AG04449 (cell line): ENCODE measurements at regions of chr3 and their contacts with region 1.

Region 1: DNA sequence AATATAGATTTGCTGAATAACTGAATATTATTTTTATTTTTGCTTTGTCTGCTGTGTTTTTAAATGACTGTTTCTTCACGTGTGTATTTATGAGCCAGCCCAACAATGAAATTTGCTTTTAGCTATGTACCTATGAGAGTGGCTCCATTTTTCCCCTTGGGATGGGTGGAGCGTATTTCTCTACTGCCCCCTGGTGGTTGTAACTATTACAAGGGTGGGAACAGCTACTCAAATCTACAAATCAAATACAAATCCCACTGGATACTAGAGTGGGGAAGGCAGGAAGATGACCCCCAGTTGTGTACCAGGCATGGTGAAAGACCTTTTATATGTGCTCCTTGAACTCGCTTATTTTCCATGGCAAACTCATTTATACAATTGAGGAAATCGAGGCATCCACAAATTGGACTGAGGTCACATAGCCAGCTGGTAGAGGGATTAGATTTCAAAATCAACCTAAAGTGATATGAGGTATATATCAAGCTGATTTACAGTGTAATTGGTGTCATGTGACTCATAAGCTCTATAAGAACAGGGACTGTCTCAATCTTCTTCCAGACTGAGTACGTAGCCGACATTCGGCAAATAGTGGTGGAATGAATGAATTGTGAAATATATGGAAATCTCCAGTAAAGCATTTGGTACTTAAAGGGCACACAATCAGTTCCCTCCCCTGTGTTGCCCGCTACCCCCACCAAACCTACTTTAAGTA is 69.5 kb upstream of the VEPH1 start:
- DNase-seq: no peak
- H3K4me3 ChIP-seq: no peak overlapping the region
- CTCF ChIP-seq: peak; percentile 44

Region 2: GRCh38 chr3:157527131-157527881 is 45.4 kb before region 1 on chr3:
- CTCF ChIA-PET with region 1: interaction called, 150 read pairs
- POLR2A ChIA-PET with region 1: interaction called, 6 read pairs
- DNase-seq: no peak
- H3K4me3 ChIP-seq: no peak overlapping the region
- CTCF ChIP-seq: no peak

Region 3: DNA sequence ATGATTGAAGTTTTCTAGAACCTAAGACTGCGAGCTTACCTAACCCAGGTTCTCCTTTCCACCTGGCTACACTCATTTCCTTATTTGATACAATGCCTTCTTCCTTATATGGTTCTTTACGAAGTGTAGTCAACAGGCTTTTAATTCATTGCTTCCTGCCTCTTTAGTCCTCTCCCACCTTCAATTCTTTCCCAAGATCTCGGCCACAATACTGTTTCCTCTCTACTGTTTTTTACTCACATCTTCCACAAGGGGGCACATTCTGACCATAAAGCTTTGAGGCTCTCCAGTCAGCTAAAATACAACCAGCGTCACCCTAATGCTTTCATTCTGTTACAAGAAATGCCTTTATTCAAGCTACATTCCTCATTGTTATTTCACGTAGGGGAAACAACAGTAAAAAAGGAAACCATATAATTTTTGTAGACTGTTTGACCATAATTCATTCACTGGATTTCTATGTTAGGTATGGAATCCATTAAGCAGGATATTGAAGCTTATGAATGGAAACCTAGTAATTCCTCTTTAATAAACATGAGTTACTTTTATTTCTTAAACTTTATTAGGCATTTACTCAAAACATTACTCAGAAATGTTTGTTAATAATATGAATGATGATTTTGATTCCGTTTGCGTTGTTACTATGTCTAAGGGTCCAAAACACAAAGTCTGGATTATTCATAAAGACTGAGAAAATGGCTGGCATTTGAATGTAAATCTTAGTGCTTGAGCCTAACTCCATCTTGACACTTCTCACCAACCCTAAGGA is 40.0 kb before region 1 on chr3:
- CTCF ChIA-PET with region 1: interaction called, 150 read pairs
- POLR2A ChIA-PET with region 1: interaction called, 6 read pairs
- DNase-seq: peak; percentile 71
- H3K4me3 ChIP-seq: peak overlapping the region; percentile 44
- CTCF ChIP-seq: peak; percentile 59

Region 4: GRCh38 chr3:157542711-157543500 is 29.8 kb before region 1 on chr3:
- CTCF ChIA-PET with region 1: interaction called, 33 read pairs
- POLR2A ChIA-PET with region 1: no interaction called
- DNase-seq: no peak
- H3K4me3 ChIP-seq: peak overlapping the region; percentile 58
- CTCF ChIP-seq: peak; percentile 55

Region 5: GRCh38 chr3:157551961-157552360 is 20.8 kb before region 1 on chr3:
- CTCF ChIA-PET with region 1: interaction called, 15 read pairs
- POLR2A ChIA-PET with region 1: no interaction called
- DNase-seq: no peak
- H3K4me3 ChIP-seq: no peak overlapping the region
- CTCF ChIP-seq: no peak

Region 6: DNA sequence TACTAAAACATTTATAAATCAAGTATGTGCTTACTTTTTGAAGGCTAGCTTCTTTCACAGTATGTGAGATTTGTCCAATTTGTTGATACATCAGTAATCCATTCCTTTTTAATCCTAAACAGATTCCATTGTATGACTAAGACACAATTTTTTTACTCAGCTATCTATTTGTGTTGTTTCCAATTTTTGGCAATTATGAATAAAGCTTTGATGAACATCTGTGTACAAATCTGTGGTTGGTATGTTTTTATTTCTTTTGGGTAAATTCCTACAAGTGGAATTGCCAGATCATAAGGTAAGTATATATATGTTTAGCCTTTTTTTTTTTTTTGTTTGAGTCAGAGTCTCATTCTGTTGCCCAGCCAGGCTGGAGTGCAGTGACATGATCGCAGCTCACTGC is 13.3 kb before region 1 on chr3:
- CTCF ChIA-PET with region 1: interaction called, 25 read pairs
- POLR2A ChIA-PET with region 1: no interaction called
- DNase-seq: no peak
- H3K4me3 ChIP-seq: no peak overlapping the region
- CTCF ChIP-seq: no peak

Region 7: GRCh38 chr3:157589211-157589610 is 16.5 kb after region 1 on chr3:
- CTCF ChIA-PET with region 1: interaction called, 14 read pairs
- POLR2A ChIA-PET with region 1: no interaction called
- DNase-seq: no peak
- H3K4me3 ChIP-seq: no peak overlapping the region
- CTCF ChIP-seq: no peak

Region 8: GRCh38 chr3:157856078-157856939 is 283.6 kb after region 1 on chr3:
- CTCF ChIA-PET with region 1: no interaction called
- POLR2A ChIA-PET with region 1: no interaction called
- DNase-seq: no peak
- H3K4me3 ChIP-seq: no peak overlapping the region
- CTCF ChIP-seq: no peak